A549 (cell line): ENCODE measurements at regions of chr5 and their contacts with region 1.

Region 1: GRCh38 chr5:177403792-177404640 is 3.6 kb upstream of the PFN3 start:
- DNase-seq: peak; percentile 87 to 95
- ATAC-seq: peak; percentile 76 to 91
- H3K4me3 ChIP-seq: peak overlapping the region; percentile 60
- H3K27ac ChIP-seq: peak overlapping the region; percentile 83 to 92
- H3K4me1 ChIP-seq: peaks cover 11% of the 10 kb centered on the region; the same call in 2 of the 3 replicates
- CTCF ChIP-seq: peak; percentile 71
- EP300 ChIP-seq: no peak
- POLR2A ChIP-seq: peak; percentile 72
- RAD21 ChIP-seq: peak; percentile 72 to 84

Region 2: GRCh38 chr5:177311723-177312648 is 92.0 kb before region 1 on chr5 and contains the start of gene MXD3:
- CTCF ChIA-PET with region 1: interaction called, 36 read pairs
- POLR2A ChIA-PET with region 1: no interaction called
- DNase-seq: peak; percentile 90 to 97
- ATAC-seq: peak; percentile 62 to 82
- H3K4me3 ChIP-seq: peak within 1 kb of the TSS; percentile 66
- H3K27ac ChIP-seq: peak within 1 kb of the TSS; percentile 87 to 93
- H3K4me1 ChIP-seq: peaks cover 19% of the 10 kb centered on the region; the same call in 2 of the 3 replicates
- CTCF ChIP-seq: no peak
- EP300 ChIP-seq: no peak
- POLR2A ChIP-seq: peak; percentile 22; the same call in 1 of the 2 replicates
- RAD21 ChIP-seq: no peak
- polyA plus RNA-seq, gene MXD3: 4.1 and 5.3 TPM in 2 replicates

Region 3: GRCh38 chr5:177327539-177328522 is 76.2 kb before region 1 on chr5:
- CTCF ChIA-PET with region 1: interaction called, 12 read pairs
- POLR2A ChIA-PET with region 1: no interaction called
- DNase-seq: no peak
- ATAC-seq: peak; percentile 28 to 57; a peak in 5 of 6 replicates
- H3K4me3 ChIP-seq: no peak overlapping the region
- H3K27ac ChIP-seq: peak overlapping the region; percentile 41 to 81
- H3K4me1 ChIP-seq: peaks cover 43% of the 10 kb centered on the region
- CTCF ChIP-seq: no peak
- EP300 ChIP-seq: no peak
- POLR2A ChIP-seq: no peak
- RAD21 ChIP-seq: no peak

Region 4: GRCh38 chr5:177357459-177358351 is 46.3 kb before region 1 on chr5 and contains the start of gene RGS14:
- CTCF ChIA-PET with region 1: interaction called, 1,107 read pairs
- POLR2A ChIA-PET with region 1: no interaction called
- DNase-seq: no peak
- ATAC-seq: no peak; a peak in 2 of 6 replicates
- H3K4me3 ChIP-seq: no peak within 1 kb of the TSS
- H3K27ac ChIP-seq: no peak within 1 kb of the TSS
- H3K4me1 ChIP-seq: peaks cover 12% of the 10 kb centered on the region; the same call in 2 of the 3 replicates
- CTCF ChIP-seq: no peak
- EP300 ChIP-seq: no peak
- POLR2A ChIP-seq: no peak
- RAD21 ChIP-seq: no peak
- polyA plus RNA-seq, gene RGS14: 3.9 and 5.8 TPM in 2 replicates

Region 5: DNA sequence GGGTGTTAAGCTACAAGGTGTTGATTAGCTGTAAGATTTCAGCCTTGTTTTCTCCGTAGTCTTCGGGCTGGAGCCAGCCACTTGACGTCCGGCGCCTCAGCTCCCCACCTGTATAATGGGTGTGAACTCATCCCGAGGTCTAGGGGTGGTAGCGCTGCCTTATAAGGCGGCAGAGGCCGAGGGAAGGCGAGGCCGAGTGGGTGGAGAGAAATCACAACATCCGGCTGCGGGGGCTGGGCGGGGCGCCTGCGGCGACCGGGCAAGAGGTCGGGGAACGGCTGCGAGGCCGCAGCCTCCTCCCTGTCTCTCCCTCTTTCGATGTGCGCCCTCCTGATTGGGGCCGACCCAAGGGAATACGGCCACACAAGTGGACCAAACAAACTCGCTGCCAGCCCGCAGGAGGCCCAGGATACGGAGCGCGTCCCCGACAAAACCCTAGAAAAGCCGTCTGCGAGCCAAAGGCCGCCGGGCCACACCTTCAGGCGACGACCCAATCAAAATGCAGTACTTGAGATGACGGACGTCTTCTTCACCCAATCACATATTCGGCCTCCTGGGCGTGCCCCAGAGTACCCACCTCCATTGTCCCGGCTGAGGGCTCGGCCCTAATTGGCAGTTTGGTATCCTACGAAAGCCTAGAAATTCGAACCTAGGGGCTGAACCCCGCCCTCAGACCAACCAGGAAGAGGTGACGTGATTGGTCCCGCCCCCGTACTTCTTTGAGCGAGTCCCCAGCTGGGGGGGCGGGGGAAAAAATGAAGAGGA is 22.0 kb after region 1 on chr5:
- CTCF ChIA-PET with region 1: interaction called, 152 read pairs
- POLR2A ChIA-PET with region 1: interaction called, 37 read pairs
- DNase-seq: peak; percentile 99 to 100
- ATAC-seq: peak; percentile 82 to 95
- H3K4me3 ChIP-seq: peak overlapping the region; percentile 44
- H3K27ac ChIP-seq: peak overlapping the region; percentile 82 to 87
- H3K4me1 ChIP-seq: peaks cover 17% of the 10 kb centered on the region
- CTCF ChIP-seq: no peak
- EP300 ChIP-seq: no peak
- POLR2A ChIP-seq: no peak; the same call in none of the 2 replicates
- RAD21 ChIP-seq: no peak

Region 6: DNA sequence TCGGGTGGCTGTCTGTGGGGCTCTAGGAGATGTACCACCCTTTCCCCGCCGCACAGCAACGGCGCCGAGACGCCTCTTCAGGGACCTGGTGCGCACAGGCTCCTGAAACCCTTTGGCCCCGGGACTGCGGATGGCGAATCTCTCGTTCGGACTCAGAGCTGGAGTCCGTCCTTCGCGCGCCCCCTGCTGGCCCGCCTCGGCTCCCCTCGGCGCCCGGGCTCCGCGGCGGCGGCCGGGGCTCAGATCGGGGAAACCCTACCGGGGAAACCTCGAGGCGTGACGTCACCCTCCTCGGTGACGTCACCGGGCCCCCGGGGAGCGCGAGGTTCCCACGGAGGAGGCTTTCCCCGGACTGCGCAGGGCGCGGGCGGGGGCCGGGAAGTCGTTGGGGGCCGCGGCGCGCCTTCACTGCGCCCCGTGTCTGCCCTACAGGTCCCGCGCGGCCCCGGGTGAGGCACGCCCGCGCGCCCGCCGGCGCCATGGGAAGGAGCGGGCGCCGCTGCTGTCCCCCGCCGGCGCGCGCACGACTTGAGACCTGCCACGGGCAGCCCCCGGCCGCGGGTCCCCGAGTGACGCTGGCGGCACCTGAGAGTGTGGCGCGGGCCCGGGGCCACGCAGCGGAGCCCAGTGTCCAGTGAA is 50.5 kb after region 1 on chr5:
- CTCF ChIA-PET with region 1: interaction called, 871 read pairs
- POLR2A ChIA-PET with region 1: interaction called, 35 read pairs
- DNase-seq: peak; percentile 89 to 99
- ATAC-seq: peak; percentile 37 to 63
- H3K4me3 ChIP-seq: peak overlapping the region; percentile 61
- H3K27ac ChIP-seq: peak overlapping the region; percentile 71 to 86
- H3K4me1 ChIP-seq: peaks cover 10% of the 10 kb centered on the region
- CTCF ChIP-seq: peak; percentile 94
- EP300 ChIP-seq: no peak
- POLR2A ChIP-seq: no peak
- RAD21 ChIP-seq: peak; percentile 72 to 92

Region 7: DNA sequence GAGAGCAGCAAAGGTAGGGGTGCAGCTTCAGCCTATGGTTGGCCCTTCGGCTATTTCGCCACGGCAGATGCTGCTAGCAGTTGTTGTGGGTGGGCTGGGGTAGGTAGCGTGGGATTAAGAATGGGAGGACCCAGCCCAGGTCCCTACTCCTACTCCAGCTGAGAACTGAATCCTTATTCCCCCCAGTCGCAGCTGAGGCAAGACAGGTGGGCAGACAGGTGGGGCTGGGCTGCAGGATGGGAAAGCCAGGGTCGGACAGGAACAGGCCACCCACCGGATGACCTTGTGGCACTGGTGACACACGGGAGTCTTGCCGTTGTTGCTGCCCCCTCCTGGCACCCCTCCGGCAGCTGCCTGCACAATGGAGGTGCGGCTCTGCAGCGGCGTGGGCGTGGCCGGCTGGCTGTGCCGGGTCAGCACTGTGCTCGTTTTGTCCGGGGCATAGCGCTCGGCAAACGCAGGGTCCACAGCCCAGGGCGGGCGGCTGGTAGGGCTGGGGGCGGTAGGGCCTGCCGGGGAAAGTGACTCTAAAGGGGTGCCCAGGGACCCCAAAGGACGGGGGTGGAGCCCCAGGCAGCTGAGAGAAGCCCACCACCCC is 85.2 kb after region 1 on chr5:
- CTCF ChIA-PET with region 1: interaction called, 100 read pairs
- POLR2A ChIA-PET with region 1: interaction called, 3 read pairs
- DNase-seq: peak in 1 of 2 experiments; percentile 41
- ATAC-seq: peak in 1 of 2 experiments; percentile 16; a peak in 3 of 6 replicates
- H3K4me3 ChIP-seq: no peak overlapping the region
- H3K27ac ChIP-seq: peak overlapping the region in 1 of 2 experiments; percentile 11; a peak in 1 of 6 replicates
- H3K4me1 ChIP-seq: peaks cover 34% of the 10 kb centered on the region
- CTCF ChIP-seq: no peak
- EP300 ChIP-seq: no peak
- POLR2A ChIP-seq: no peak
- RAD21 ChIP-seq: no peak

Region 8: DNA sequence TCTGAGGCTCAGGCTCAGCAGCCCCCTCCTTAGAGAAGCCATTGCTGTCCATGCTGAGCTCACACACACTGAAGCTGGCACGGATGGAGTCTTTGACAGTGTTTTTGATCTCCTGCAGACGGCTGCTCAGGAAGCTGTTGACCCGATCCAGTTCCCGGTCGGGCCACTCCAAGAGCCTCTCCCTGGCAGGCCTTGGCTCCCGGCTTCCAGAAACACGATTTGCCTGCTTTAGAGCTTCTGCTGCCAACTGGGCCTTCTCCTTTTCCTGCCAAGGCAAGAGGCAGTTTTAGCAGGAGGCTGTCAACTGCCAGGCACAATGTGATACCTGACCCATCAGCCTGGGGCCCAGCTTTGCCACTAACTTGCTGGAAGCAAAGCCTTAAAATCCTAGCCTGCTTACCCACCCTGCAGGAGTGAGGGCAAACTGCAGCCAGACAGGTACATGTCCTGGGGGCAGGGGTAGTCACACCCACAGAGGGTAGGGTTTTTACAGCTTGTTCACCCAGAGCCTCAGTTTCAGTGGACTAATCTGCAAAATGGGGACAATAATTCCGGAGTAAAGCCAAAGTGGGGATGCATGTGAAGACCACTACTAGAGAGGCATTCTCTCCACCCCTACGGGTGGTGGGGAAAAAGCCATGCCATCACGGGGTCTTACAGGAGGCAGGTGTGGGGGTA is 121.1 kb after region 1 on chr5:
- CTCF ChIA-PET with region 1: no interaction called
- POLR2A ChIA-PET with region 1: no interaction called
- DNase-seq: no peak
- ATAC-seq: no peak
- H3K4me3 ChIP-seq: no peak overlapping the region
- H3K27ac ChIP-seq: no peak overlapping the region
- H3K4me1 ChIP-seq: no peaks in the 10 kb centered on the region
- CTCF ChIP-seq: no peak
- EP300 ChIP-seq: no peak
- POLR2A ChIP-seq: no peak
- RAD21 ChIP-seq: no peak

Region 9: GRCh38 chr5:178113199-178113787 is 709.3 kb after region 1 on chr5 and contains the start of gene N4BP3:
- CTCF ChIA-PET with region 1: no interaction called
- POLR2A ChIA-PET with region 1: no interaction called
- DNase-seq: peak; percentile 42 to 60
- ATAC-seq: peak; percentile 71 to 75
- H3K4me3 ChIP-seq: peak within 1 kb of the TSS; percentile 59
- H3K27ac ChIP-seq: peak within 1 kb of the TSS; percentile 56 to 87; a peak in 5 of 6 replicates
- H3K4me1 ChIP-seq: peaks cover 11% of the 10 kb centered on the region; the same call in 2 of the 3 replicates
- CTCF ChIP-seq: peak; percentile 27
- EP300 ChIP-seq: no peak
- POLR2A ChIP-seq: no peak
- RAD21 ChIP-seq: no peak
- polyA plus RNA-seq, gene N4BP3: 0.12 and 0.26 TPM in 2 replicates